ENCODE measurements at regions of chr12 and their contacts with region 1.

Region 1: GRCh38 chr12:47413806-47414205 is 292.0 kb downstream of the RPAP3 start:
- DNase-seq: no peak
- H3K4me3 Mint-ChIP-seq: no peak overlapping the region
- H3K27ac Mint-ChIP-seq: peak overlapping the region; percentile 69
- H3K4me1 Mint-ChIP-seq: peaks cover 83% of the 10 kb centered on the region
- H3K27me3 Mint-ChIP-seq: no peaks in the 10 kb centered on the region

Region 2: GRCh38 chr12:47636908-47637780 is 223.3 kb after region 1 on chr12:
- CTCF ChIA-PET with region 1: interaction called, 3 read pairs
- intact Hi-C with region 1: loop called (anchors 5 kb)
- DNase-seq: peak; percentile 68
- H3K4me3 Mint-ChIP-seq: no peak overlapping the region
- H3K27ac Mint-ChIP-seq: no peak overlapping the region
- H3K4me1 Mint-ChIP-seq: peaks cover 2% of the 10 kb centered on the region
- H3K27me3 Mint-ChIP-seq: no peaks in the 10 kb centered on the region

Region 3: GRCh38 chr12:47686645-47687240 is 272.9 kb after region 1 on chr12:
- CTCF ChIA-PET with region 1: no interaction called
- intact Hi-C with region 1: loop called (anchors 5 kb)
- DNase-seq: peak; percentile 57
- H3K4me3 Mint-ChIP-seq: no peak overlapping the region
- H3K27ac Mint-ChIP-seq: no peak overlapping the region
- H3K4me1 Mint-ChIP-seq: peaks cover 12% of the 10 kb centered on the region
- H3K27me3 Mint-ChIP-seq: no peaks in the 10 kb centered on the region

Region 4: DNA sequence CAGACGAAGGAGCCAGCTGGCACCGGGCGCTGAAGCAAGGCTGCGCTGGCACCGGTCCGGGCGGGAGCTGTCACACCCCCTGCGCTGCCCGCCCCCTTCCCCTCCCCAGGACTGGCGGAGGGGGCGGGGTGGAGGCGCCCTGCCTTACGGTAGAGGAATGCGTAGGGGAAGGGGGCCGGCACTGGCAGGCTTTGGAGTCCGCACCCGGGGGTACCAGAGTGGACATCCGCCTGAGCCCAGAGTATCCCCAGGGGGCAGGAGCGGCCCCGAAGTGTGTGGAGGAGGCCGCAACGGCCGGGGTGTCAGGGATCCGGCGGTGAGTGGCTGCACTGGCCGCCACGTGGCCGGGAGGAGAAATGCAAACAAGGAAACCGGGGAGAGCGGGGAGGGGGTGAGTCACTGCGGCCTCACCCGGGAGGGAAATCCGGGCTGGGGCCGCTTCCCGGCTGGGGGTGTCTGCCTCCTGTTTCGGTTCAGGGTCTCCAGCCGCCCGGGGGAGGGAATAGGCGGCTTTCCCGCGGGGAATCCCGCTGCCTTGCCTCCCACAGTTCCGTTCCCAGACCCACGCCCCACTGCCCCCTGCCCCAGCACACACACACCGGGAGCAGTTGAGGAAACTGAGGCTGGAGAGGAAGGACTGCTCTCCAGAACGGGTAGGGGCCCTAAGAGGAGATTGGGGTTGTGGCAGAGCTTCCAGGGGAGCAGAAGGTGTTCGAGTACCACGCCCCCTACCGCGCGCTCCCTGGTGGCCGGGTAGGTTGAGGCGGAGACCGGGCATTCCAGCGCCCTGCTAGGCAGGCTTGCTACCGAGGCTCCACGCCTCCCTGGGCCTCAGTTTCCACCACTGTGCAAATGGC is 345.3 kb after region 1 on chr12 and contains the start of gene RAPGEF3:
- CTCF ChIA-PET with region 1: no interaction called
- intact Hi-C with region 1: loop called (anchors 5 kb)
- DNase-seq: peak; percentile 86
- H3K4me3 Mint-ChIP-seq: peak within 1 kb of the TSS; percentile 65
- H3K27ac Mint-ChIP-seq: no peak within 1 kb of the TSS
- H3K4me1 Mint-ChIP-seq: peaks cover 24% of the 10 kb centered on the region
- H3K27me3 Mint-ChIP-seq: no peaks in the 10 kb centered on the region
- total RNA-seq, gene RAPGEF3: 1.5 to 1.6 TPM